ENCODE measurements at regions of chr4 and their contacts with region 1.

Region 1: GRCh38 chr4:3660086-3660927 is 105.9 kb upstream of the ADRA2C start:
- DNase-seq: no peak
- H3K4me3 ChIP-seq: no peak overlapping the region
- H3K27ac ChIP-seq: no peak overlapping the region
- H3K4me1 ChIP-seq: no peaks in the 10 kb centered on the region
- H3K27me3 ChIP-seq: no peaks in the 10 kb centered on the region
- CTCF ChIP-seq: no peak

Region 2: GRCh38 chr4:3732076-3733028 is 72.0 kb after region 1 on chr4:
- CTCF ChIA-PET with region 1: no interaction called
- dilution Hi-C with region 1: loop called (anchors 5 kb)
- in situ Hi-C with region 1: no loop called
- intact Hi-C with region 1: no loop called
- DNase-seq: no peak
- H3K4me3 ChIP-seq: no peak overlapping the region
- H3K27ac ChIP-seq: no peak overlapping the region
- H3K4me1 ChIP-seq: no peaks in the 10 kb centered on the region
- H3K27me3 ChIP-seq: no peaks in the 10 kb centered on the region
- CTCF ChIP-seq: no peak

Region 3: GRCh38 chr4:4170596-4171150 is 510.4 kb after region 1 on chr4:
- CTCF ChIA-PET with region 1: no interaction called
- dilution Hi-C with region 1: no loop called
- in situ Hi-C with region 1: no loop called
- intact Hi-C with region 1: no loop called
- DNase-seq: no peak
- H3K4me3 ChIP-seq: no peak overlapping the region
- H3K27ac ChIP-seq: no peak overlapping the region
- H3K4me1 ChIP-seq: no peaks in the 10 kb centered on the region
- H3K27me3 ChIP-seq: no peaks in the 10 kb centered on the region
- CTCF ChIP-seq: no peak

Measured in mammary epithelial cell (primary cell).